Right ventricle myocardium inferior (tissue), 1 donor: ENCODE measurements at regions of chr16 and their contacts with region 1.

Region 1: GRCh38 chr16:71484006-71484893 is 4.9 kb downstream of the ZNF19 start:
- DNase-seq: peak; percentile 91
- ATAC-seq: peak; percentile 96

Region 2: GRCh38 chr16:71288890-71289733 is 195.1 kb before region 1 on chr16 and contains the start of gene CMTR2:
- intact Hi-C with region 1: loop called (anchors 10 kb)
- DNase-seq: peak; percentile 98
- ATAC-seq: peak; percentile 99
- total RNA-seq, gene CMTR2: 8.2 TPM

Region 3: GRCh38 chr16:71461686-71462648 is 22.3 kb before region 1 on chr16 and contains the start of gene ZNF23:
- intact Hi-C with region 1: loop called (anchors 1 kb)
- DNase-seq: peak; percentile 95
- ATAC-seq: peak; percentile 99
- total RNA-seq, gene ZNF23: 5.9 TPM

Region 4: GRCh38 chr16:71552698-71553451 is 68.6 kb after region 1 on chr16:
- intact Hi-C with region 1: no loop called
- DNase-seq: no peak
- ATAC-seq: no peak